Sigmoid colon (tissue), 7 donors: ENCODE measurements at regions of chr12 and their contacts with region 1.

Region 1: GRCh38 chr12:48157018-48157888 is at the start of gene ASB8:
- DNase-seq: peak; percentile 100
- H3K4me3 ChIP-seq: peak within 1 kb of the TSS; percentile 74 to 94 (median 89)
- H3K27ac ChIP-seq: peak within 1 kb of the TSS; percentile 84 to 90 (median 89)
- H3K4me1 ChIP-seq: peaks cover 0 to 23% (median 10%) of the 10 kb centered on the region in 4 donors
- H3K27me3 ChIP-seq: no peaks in the 10 kb centered on the region
- CTCF ChIP-seq: peak in 3 of 4 experiments; percentile 37 to 47 (median 46)
- EP300 ChIP-seq: peak in 1 of 4 donors; percentile 43
- POLR2A ChIP-seq: peak in 1 of 2 donors; percentile 5
- total RNA-seq, gene ASB8: 35.6 to 64.3 (median 38.5) TPM

Region 2: DNA sequence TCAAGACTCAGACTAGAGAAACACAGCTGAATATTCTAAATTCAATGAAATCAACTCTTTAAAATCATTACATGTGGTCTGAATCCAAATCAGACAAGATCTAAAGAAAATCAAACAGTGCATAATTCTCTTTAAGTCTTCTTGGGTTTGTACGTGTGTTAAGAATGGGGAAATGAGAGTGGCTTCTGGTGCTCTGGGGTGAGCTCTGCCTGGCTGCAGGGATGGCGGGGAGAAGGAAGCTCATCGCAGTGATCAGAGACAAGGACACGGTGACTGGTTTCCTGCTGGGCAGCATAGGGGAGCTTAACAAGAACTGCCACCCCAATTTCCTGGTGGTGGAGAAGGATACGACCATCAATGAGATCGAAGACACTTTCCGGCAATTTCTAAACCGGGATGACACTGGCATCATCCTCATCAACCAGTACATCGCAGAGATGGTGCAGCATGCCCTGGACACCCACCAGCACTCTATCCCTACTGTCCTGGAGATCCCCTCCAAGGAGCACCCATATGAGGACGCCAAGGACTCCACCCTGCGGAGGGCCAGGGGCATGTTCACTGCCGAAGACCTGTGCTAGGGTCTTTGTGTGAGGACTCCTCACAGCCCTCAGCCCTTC is 72.3 kb before region 1 on chr12:
- intact Hi-C with region 1: loop called (anchors 5 kb)
- DNase-seq: no peak
- H3K4me3 ChIP-seq: no peak overlapping the region
- H3K27ac ChIP-seq: no peak overlapping the region
- H3K4me1 ChIP-seq: no peaks in the 10 kb centered on the region
- H3K27me3 ChIP-seq: no peaks in the 10 kb centered on the region
- CTCF ChIP-seq: no peak
- EP300 ChIP-seq: no peak
- POLR2A ChIP-seq: no peak

Region 3: DNA sequence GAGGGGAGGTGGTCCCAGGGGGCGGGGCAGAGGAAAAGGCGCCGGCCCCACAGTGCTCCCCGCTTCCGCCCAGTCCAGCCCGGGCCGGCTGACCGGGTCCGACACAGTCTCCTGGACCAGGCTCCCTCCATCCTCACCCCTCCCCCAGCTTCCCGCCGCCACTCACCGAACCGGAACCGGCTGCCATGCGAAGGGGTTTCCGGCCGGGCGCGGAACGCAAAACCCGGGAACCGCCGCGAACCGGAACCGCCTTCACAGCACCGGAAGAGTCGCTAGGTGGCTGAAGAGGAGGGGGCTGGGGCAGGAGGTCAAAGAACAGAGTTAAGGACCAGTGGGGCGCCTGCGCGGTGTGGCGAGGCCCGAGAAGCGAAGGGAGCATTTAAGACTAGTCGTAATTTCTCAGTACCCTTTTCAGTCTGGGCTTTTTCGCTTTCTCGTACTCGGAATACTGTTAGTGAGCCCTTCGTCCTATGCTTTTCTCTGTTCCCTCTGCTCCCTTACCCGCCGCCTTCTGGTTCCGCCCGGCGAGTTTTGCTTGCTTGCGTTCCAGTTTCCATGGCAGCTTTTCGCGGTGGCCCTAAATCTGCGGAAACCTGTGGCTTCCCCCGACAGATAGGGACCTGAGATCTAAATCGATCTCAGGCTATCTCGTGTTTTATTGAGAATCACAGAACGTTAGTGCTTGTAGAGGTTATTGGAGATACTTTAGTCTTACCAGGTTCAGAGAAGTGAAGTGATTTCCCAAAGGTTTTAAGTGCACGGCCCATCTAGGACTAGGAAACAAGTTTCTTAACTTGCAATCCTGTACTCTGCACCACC is 51.2 kb before region 1 on chr12 and contains the start of gene SENP1:
- intact Hi-C with region 1: loop called (anchors 1 kb)
- DNase-seq: peak; percentile 93
- H3K4me3 ChIP-seq: peak within 1 kb of the TSS; percentile 70 to 91 (median 86)
- H3K27ac ChIP-seq: peak within 1 kb of the TSS; percentile 86 to 91 (median 88)
- H3K4me1 ChIP-seq: peaks cover 0 to 18% (median 17%) of the 10 kb centered on the region in 4 donors
- H3K27me3 ChIP-seq: no peaks in the 10 kb centered on the region
- CTCF ChIP-seq: peak in 2 of 4 experiments; percentile 44 to 55
- EP300 ChIP-seq: no peak
- POLR2A ChIP-seq: peak in 1 of 2 donors; percentile 10
- total RNA-seq, gene SENP1: 16.9 to 26.0 (median 24.3) TPM

Region 4: GRCh38 chr12:48197971-48198671 is 40.9 kb after region 1 on chr12:
- intact Hi-C with region 1: loop called (anchors 5 kb)
- DNase-seq: peak; percentile 99
- H3K4me3 ChIP-seq: peak overlapping the region; percentile 51 to 75 (median 62)
- H3K27ac ChIP-seq: peak overlapping the region; percentile 89 to 98 (median 94)
- H3K4me1 ChIP-seq: peaks cover 0 to 31% (median 28%) of the 10 kb centered on the region in 4 donors
- H3K27me3 ChIP-seq: no peaks in the 10 kb centered on the region
- CTCF ChIP-seq: no peak
- EP300 ChIP-seq: peak in 1 of 4 donors; percentile 54
- POLR2A ChIP-seq: peak; percentile 96